ENCODE measurements at regions of chr18 and their contacts with region 1.

Region 1: GRCh38 chr18:5295981-5296705 is 617 bp upstream of the ZBTB14 start:
- DNase-seq: peak; percentile 94 to 96 (median 95)
- H3K4me3 ChIP-seq: peak overlapping the region; percentile 69 to 77
- H3K4me3 Mint-ChIP-seq: peak overlapping the region; percentile 89 to 98 (median 96)
- H3K27ac ChIP-seq: peak overlapping the region; percentile 84
- H3K27ac Mint-ChIP-seq: peak overlapping the region; percentile 89 to 99 (median 97)
- H3K4me1 ChIP-seq: peaks cover 28% of the 10 kb centered on the region
- H3K4me1 Mint-ChIP-seq: peaks cover 18 to 49% (median 36%) of the 10 kb centered on the region in 4 donors
- H3K27me3 ChIP-seq: no peaks in the 10 kb centered on the region
- H3K27me3 Mint-ChIP-seq: peaks cover 0 to 3% of the 10 kb centered on the region in 2 donors

Region 2: DNA sequence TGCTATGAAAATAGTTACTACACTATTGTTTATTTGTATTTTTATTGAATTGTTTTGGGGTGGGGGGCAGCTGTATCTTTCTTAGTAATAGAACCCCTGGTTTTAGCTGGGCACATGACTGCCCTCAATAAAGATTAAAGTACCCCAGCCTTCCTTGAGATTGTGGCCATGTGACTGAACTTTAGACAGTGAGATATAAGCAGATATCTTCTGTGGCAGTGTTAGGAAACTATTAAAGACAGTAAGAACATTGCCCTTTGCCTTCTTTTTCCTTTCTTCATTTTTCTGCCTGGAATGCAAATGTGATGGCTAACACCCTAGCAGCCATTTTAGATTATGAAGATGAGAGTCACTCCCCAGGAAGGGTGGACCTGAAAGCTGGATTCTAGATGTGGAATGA is 51.2 kb before region 1 on chr18:
- CTCF ChIA-PET with region 1: interaction called, 4 read pairs
- POLR2A ChIA-PET with region 1: interaction called, 54 read pairs
- intact Hi-C with region 1: no loop called
- DNase-seq: no peak
- H3K4me3 ChIP-seq: no peak overlapping the region
- H3K4me3 Mint-ChIP-seq: no peak overlapping the region
- H3K27ac ChIP-seq: no peak overlapping the region
- H3K27ac Mint-ChIP-seq: no peak overlapping the region
- H3K4me1 ChIP-seq: peaks cover 21% of the 10 kb centered on the region
- H3K4me1 Mint-ChIP-seq: peaks cover 15 to 41% (median 24%) of the 10 kb centered on the region in 4 donors
- H3K27me3 ChIP-seq: no peaks in the 10 kb centered on the region
- H3K27me3 Mint-ChIP-seq: peaks cover 0 to 1% of the 10 kb centered on the region in 2 donors

Region 3: DNA sequence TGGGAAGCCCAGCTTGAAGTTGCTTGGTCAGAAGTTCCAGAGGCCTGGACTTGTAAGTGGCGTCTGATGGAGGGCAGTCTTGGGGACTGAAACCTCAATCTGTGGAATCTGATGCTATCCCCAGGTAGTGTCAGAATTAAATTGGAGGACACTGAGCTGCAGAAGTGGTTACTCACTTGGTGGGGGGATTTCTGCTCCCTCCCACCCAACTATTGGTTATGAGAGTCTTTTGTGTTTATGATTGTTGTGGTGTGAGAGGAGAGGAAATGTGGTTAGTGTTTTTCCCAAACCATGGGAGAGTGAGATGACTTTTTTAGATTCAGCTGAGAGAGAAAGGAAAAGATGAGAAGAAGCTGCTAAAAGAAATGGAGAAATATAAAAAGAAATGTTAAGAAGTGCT is 13.4 kb before region 1 on chr18:
- CTCF ChIA-PET with region 1: interaction called, 7 read pairs
- POLR2A ChIA-PET with region 1: interaction called, 17 read pairs
- intact Hi-C with region 1: no loop called
- DNase-seq: no peak
- H3K4me3 ChIP-seq: no peak overlapping the region
- H3K4me3 Mint-ChIP-seq: peak overlapping the region in 3 of 8 donors; percentile 7 to 36 (median 21)
- H3K27ac ChIP-seq: no peak overlapping the region
- H3K27ac Mint-ChIP-seq: peak overlapping the region in 4 of 7 donors; percentile 6 to 70 (median 38)
- H3K4me1 ChIP-seq: peaks cover under 1% of the 10 kb centered on the region
- H3K4me1 Mint-ChIP-seq: peaks cover 5 to 23% (median 13%) of the 10 kb centered on the region in 4 donors
- H3K27me3 ChIP-seq: no peaks in the 10 kb centered on the region
- H3K27me3 Mint-ChIP-seq: no peaks in the 10 kb centered on the region

Region 4: DNA sequence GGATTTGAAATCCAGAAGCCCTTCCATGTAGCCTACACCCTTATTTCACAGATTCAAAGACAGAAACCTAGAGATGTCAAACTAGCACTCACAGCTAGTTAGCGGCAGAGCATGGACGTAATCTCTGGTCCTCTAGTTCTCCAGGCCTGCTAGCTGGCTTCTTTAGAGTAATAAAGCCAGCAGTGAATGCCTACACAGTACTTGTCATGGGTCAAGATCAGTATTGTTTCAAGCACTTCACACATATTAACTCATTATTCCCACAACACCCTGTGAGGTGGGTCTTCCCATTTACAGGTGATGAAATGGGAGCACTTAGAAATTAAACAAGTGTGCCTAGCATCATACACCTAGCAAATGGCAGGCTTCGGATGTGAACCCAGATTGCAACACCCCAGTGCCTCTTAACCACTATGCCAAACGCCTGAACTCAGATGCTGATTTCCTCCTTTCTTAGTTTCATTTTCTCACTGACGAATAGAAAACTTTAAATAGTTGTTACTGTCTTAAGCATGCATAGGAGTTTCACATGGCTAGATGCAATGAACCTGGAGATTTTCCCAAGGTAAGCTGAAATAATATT is 13.8 kb after region 1 on chr18:
- CTCF ChIA-PET with region 1: interaction called, 6 read pairs
- POLR2A ChIA-PET with region 1: interaction called, 109 read pairs
- intact Hi-C with region 1: loop called (anchors 1 kb)
- DNase-seq: peak; percentile 42 to 58 (median 53)
- H3K4me3 ChIP-seq: peak overlapping the region; percentile 4 to 51
- H3K4me3 Mint-ChIP-seq: peak overlapping the region; percentile 77 to 94 (median 88)
- H3K27ac ChIP-seq: peak overlapping the region; percentile 29
- H3K27ac Mint-ChIP-seq: peak overlapping the region; percentile 84 to 94 (median 92)
- H3K4me1 ChIP-seq: peaks cover 17% of the 10 kb centered on the region
- H3K4me1 Mint-ChIP-seq: peaks cover 12 to 24% (median 18%) of the 10 kb centered on the region in 4 donors
- H3K27me3 ChIP-seq: no peaks in the 10 kb centered on the region
- H3K27me3 Mint-ChIP-seq: no peaks in the 10 kb centered on the region